OCI-LY7 (cell line): ENCODE measurements at regions of chr6 and their contacts with region 1.

Region 1: GRCh38 chr6:37691904-37692806 is 5.5 kb downstream of the MDGA1 start:
- DNase-seq: peak; percentile 73
- H3K4me3 ChIP-seq: no peak overlapping the region
- H3K27ac ChIP-seq: no peak overlapping the region
- H3K4me1 ChIP-seq: peaks cover 6% of the 10 kb centered on the region
- CTCF ChIP-seq: peak; percentile 92

Region 2: DNA sequence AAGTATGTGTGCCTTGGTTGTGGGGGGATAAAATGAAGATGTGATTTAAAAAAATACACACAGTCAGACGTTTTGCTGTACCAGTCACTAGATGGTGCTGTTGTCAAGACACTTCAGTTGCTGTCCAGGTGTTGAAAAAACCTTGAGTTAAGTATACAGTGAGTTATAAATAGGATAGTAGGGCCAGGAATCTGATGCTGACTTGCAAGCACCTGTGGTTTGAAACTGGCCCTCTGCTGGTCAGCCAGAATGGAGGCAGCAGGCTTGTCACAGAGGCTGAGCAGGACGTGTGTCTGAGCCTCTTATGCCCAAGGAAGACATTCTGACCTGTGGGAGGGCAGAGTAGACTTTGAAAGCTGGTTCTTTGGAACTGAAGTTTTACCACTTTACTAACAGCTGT is 310.6 kb before region 1 on chr6:
- CTCF ChIA-PET with region 1: no interaction called
- POLR2A ChIA-PET with region 1: no interaction called
- intact Hi-C with region 1: loop called (anchors 5 kb)
- DNase-seq: peak; percentile 83
- H3K4me3 ChIP-seq: no peak overlapping the region
- H3K27ac ChIP-seq: no peak overlapping the region
- H3K4me1 ChIP-seq: peaks cover 2% of the 10 kb centered on the region
- CTCF ChIP-seq: peak; percentile 91

Region 3: GRCh38 chr6:37499433-37500293 is 192.5 kb before region 1 on chr6 and contains the start of gene CCDC167:
- CTCF ChIA-PET with region 1: no interaction called
- POLR2A ChIA-PET with region 1: no interaction called
- intact Hi-C with region 1: no loop called
- DNase-seq: peak; percentile 98
- H3K4me3 ChIP-seq: peak within 1 kb of the TSS; percentile 84
- H3K27ac ChIP-seq: peak within 1 kb of the TSS; percentile 49
- H3K4me1 ChIP-seq: peaks cover 52% of the 10 kb centered on the region
- CTCF ChIP-seq: no peak
- total RNA-seq, gene CCDC167: 138 and 153 TPM in 2 replicates

Region 4: DNA sequence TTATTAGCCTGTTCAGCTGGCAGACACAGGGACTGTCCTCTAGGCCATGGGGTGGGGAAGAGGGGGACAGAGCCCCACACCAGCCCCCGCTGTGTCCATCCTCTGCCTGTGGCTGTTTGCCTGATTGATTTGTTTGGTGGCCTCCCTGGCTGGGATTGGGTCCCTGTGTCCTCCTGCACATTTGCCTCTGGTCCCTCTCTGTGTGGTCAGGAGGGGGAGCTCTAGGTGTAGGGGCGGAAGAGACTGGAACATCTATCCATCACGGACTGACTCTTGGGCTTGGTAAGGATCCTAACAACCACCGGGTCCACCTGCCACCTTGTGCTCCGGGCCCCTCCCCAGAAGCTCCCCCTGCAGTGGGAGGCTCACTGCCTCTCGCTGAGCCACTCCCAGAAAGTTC is 154.0 kb before region 1 on chr6:
- CTCF ChIA-PET with region 1: no interaction called
- POLR2A ChIA-PET with region 1: no interaction called
- intact Hi-C with region 1: loop called (anchors 2 kb)
- DNase-seq: no peak
- H3K4me3 ChIP-seq: no peak overlapping the region
- H3K27ac ChIP-seq: no peak overlapping the region
- H3K4me1 ChIP-seq: no peaks in the 10 kb centered on the region
- CTCF ChIP-seq: peak; percentile 68

Region 5: GRCh38 chr6:37582306-37582705 is 109.8 kb before region 1 on chr6:
- CTCF ChIA-PET with region 1: interaction called, 3 read pairs
- POLR2A ChIA-PET with region 1: no interaction called
- intact Hi-C with region 1: loop called (anchors 5 kb)
- DNase-seq: no peak
- H3K4me3 ChIP-seq: no peak overlapping the region
- H3K27ac ChIP-seq: no peak overlapping the region
- H3K4me1 ChIP-seq: no peaks in the 10 kb centered on the region
- CTCF ChIP-seq: no peak

Region 6: DNA sequence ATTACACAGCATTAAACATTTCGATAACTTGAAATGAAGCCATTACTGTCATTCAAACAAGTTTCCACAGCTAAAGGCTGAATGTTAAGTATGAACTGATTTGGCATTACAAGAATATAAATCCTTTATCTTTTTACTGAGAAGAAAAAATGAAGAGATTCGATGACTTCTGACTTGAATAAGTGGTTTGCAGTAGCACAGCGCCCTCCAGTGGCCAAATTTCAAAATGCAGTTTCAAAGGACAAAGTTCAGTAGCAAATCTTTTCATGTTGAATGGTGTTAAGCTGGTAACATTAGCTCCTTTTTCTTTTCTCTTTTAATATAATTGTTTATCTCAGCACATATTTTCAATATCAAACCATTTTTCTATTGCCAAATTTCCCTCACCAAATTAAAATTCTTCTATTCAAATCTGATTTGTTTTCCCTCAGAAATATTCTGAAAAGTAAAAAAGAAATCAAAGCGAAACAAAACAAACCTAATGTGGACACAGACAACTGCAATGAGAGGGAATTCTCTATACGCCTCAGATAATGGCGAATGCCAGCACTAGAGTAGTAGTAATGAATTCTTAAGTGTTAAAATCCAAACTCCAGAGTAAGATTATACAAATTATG is 801.9 kb after region 1 on chr6:
- CTCF ChIA-PET with region 1: no interaction called
- POLR2A ChIA-PET with region 1: no interaction called
- intact Hi-C with region 1: loop called (anchors 1 kb)
- DNase-seq: peak; percentile 57
- H3K4me3 ChIP-seq: no peak overlapping the region
- H3K27ac ChIP-seq: no peak overlapping the region
- H3K4me1 ChIP-seq: no peaks in the 10 kb centered on the region
- CTCF ChIP-seq: peak; percentile 99